H1 (cell line): ENCODE measurements at regions of chr17 and their contacts with region 1.

Region 1: GRCh38 chr17:74394977-74395376 is 27.7 kb downstream of the GPR142 start:
- DNase-seq: no peak
- H3K4me3 ChIP-seq: no peak overlapping the region
- H3K27ac ChIP-seq: no peak overlapping the region
- H3K4me1 ChIP-seq: no peaks in the 10 kb centered on the region; a peak in 1 of 7 replicates
- H3K27me3 ChIP-seq: no peaks in the 10 kb centered on the region
- CTCF ChIP-seq: no peak
- EP300 ChIP-seq: no peak
- POLR2A ChIP-seq: no peak
- RAD21 ChIP-seq: no peak

Region 2: GRCh38 chr17:74408262-74408661 is 13.3 kb after region 1 on chr17:
- CTCF ChIA-PET with region 1: interaction called, 12 read pairs
- POLR2A ChIA-PET with region 1: interaction called, 3 read pairs
- DNase-seq: no peak
- H3K4me3 ChIP-seq: no peak overlapping the region
- H3K27ac ChIP-seq: no peak overlapping the region
- H3K4me1 ChIP-seq: peaks cover 3 to 23% (median 14%) of the 10 kb centered on the region in 4 experiments
- H3K27me3 ChIP-seq: no peaks in the 10 kb centered on the region
- CTCF ChIP-seq: peak; percentile 14 to 27 (median 15); a peak in 3 of 4 replicates
- EP300 ChIP-seq: no peak
- POLR2A ChIP-seq: no peak
- RAD21 ChIP-seq: peak; percentile 27 to 52; a peak in 3 of 4 replicates